B cell (primary cell): ENCODE measurements at regions of chr1 and their contacts with region 1.

Region 1: DNA sequence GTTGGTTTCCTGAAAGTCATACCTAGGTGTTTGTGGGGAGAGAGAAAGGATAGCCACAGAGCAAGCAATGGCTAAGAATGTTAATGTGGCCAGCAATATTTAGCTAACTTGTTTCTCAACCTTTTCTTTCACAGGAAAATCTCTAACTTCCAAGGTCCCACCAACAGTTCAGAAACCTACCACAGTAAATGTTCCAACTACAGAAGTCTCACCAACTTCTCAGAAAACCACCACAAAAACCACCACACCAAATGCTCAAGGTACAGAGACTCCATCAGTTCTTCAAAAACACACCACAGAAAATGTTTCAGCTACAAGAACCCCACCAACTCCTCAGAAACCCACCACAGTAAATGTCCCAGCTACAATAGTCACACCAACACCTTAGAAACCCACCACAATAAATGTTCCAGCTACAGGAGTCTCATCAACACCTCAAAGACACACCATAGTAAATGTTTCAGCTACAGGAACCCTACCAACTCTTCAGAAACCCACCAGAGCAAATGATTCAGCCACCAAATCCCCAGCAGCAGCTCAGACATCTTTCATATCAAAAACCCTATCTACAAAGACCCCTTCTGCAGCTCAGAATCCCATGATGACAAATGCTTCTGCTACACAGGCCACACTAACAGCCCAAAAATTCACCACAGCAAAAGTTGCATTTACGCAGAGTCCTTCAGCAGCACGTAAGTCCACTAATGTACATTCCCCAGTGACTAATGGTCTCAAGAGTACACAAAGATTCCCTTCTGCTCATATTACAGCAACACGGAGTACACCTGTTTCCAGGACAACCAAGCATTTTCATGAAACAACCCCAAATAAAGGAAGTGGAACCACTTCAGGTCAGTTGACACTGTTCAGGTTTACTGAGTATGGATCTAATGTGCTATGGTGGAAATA is 15.3 kb downstream of the CD55 start:
- DNase-seq: peak; percentile 92
- ATAC-seq: peak; percentile 79
- H3K4me3 ChIP-seq: peak overlapping the region in 3 of 5 experiments; percentile 15 to 42 (median 27)
- H3K4me3 Mint-ChIP-seq: peak overlapping the region; percentile 72
- H3K27ac ChIP-seq: peak overlapping the region; percentile 95 to 98
- H3K27ac Mint-ChIP-seq: peak overlapping the region; percentile 94
- H3K4me1 ChIP-seq: peaks cover 52 to 74% of the 10 kb centered on the region in 2 donors
- H3K4me1 Mint-ChIP-seq: peaks cover 75% of the 10 kb centered on the region
- H3K27me3 ChIP-seq: no peaks in the 10 kb centered on the region
- H3K27me3 Mint-ChIP-seq: no peaks in the 10 kb centered on the region
- CTCF ChIP-seq: no peak

Region 2: DNA sequence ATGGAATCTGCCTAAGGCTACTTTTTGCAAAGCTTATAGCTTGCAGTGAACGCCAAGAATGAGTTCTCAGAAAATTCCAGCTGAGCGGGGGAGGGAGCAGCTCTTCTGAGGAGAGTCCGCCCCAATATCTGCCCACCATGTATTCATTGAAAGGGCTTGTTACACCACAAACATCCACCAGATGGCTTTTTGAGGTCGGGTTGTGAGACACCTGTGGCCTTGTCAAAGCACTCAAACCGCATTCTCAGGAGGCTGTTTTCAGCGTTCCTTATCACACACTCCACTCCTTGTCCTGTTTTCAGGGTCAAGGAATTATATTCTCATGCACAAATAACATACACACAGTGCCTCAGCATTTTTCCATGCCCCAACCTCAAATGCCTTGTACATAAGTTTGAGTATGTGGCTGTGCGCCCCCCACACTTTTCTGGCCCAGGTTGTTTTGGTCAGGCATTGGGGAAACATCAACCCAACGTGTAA is 252.1 kb before region 1 on chr1:
- CTCF ChIA-PET with region 1: interaction called, 6 read pairs
- POLR2A ChIA-PET with region 1: no interaction called
- intact Hi-C with region 1: loop called (anchors 5 kb)
- DNase-seq: peak; percentile 82
- ATAC-seq: peak; percentile 84
- H3K4me3 ChIP-seq: no peak overlapping the region
- H3K4me3 Mint-ChIP-seq: no peak overlapping the region
- H3K27ac ChIP-seq: no peak overlapping the region
- H3K27ac Mint-ChIP-seq: no peak overlapping the region
- H3K4me1 ChIP-seq: peaks cover 14 to 15% of the 10 kb centered on the region in 2 donors
- H3K4me1 Mint-ChIP-seq: peaks cover 13% of the 10 kb centered on the region
- H3K27me3 ChIP-seq: no peaks in the 10 kb centered on the region
- H3K27me3 Mint-ChIP-seq: no peaks in the 10 kb centered on the region
- CTCF ChIP-seq: peak; percentile 77

Region 3: DNA sequence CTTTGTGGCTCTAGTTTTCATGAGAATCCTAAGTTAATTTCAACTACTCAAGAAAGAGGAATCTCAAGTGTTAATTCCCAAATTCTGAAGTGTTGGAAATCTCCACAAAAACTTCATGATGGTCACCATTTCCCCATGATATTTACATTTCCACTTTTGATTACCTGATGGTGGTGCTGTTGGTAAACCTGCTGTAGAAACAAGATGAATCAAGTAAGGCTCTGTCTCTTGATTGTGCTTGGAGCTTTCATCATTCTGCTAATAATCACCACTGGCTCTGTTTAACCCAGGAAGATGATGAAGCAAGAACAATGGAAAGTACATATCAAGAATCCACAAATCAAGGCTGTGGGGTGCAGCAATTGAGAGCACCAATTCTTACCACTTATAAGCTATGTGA is 155.0 kb before region 1 on chr1:
- CTCF ChIA-PET with region 1: interaction called, 12 read pairs
- POLR2A ChIA-PET with region 1: no interaction called
- intact Hi-C with region 1: no loop called
- DNase-seq: peak; percentile 54
- ATAC-seq: no peak
- H3K4me3 ChIP-seq: no peak overlapping the region
- H3K4me3 Mint-ChIP-seq: no peak overlapping the region
- H3K27ac ChIP-seq: no peak overlapping the region
- H3K27ac Mint-ChIP-seq: no peak overlapping the region
- H3K4me1 ChIP-seq: no peaks in the 10 kb centered on the region
- H3K4me1 Mint-ChIP-seq: peaks cover 11% of the 10 kb centered on the region
- H3K27me3 ChIP-seq: no peaks in the 10 kb centered on the region
- H3K27me3 Mint-ChIP-seq: peaks cover 6% of the 10 kb centered on the region
- CTCF ChIP-seq: peak; percentile 43

Region 4: DNA sequence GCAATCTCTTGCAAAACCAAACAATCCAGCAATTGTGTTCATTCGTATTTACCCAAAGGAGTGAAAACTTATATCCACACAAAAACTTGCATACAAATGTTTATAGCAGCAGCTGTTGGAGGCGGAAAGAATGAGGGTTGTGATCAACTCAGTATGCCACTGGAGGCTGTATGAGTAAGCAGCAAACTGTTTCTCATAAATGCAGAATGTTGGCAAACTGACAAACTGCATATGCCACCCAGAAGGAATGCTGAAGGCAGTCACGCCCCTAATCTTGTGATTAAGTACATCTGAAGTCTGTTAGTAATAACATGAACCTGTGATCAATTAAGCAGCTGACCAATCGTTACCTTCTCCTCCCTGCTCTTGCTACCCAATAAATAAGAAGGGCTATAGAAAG is 56.8 kb after region 1 on chr1:
- CTCF ChIA-PET with region 1: no interaction called
- POLR2A ChIA-PET with region 1: no interaction called
- intact Hi-C with region 1: no loop called
- DNase-seq: no peak
- ATAC-seq: no peak
- H3K4me3 ChIP-seq: no peak overlapping the region
- H3K4me3 Mint-ChIP-seq: no peak overlapping the region
- H3K27ac ChIP-seq: no peak overlapping the region
- H3K27ac Mint-ChIP-seq: no peak overlapping the region
- H3K4me1 ChIP-seq: no peaks in the 10 kb centered on the region
- H3K4me1 Mint-ChIP-seq: peaks cover 7% of the 10 kb centered on the region
- H3K27me3 ChIP-seq: no peaks in the 10 kb centered on the region
- H3K27me3 Mint-ChIP-seq: no peaks in the 10 kb centered on the region
- CTCF ChIP-seq: no peak

Region 5: DNA sequence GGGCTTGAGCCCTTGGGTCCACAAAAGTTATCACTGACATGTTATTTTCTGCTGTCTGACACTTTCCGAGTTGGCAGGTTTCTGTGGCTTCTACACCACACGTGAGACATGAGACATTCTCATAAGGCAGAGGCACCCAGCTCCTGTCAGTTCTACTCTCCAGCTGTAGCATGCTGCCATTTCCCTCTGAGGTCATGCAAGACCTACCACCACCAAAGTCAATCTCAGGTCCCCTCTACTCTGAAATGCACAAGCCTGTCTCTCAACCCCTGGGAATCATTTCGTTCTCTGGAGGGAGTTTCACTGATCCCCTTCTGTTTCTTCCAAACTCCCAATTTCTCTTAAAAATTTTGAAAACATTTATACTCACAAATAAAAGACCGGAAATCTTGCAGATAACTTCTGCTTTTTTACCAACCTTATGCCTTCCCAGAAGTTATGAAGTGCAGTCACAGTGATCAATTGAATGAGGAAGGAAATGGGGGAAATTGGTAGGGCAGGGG is 77.8 kb after region 1 on chr1:
- CTCF ChIA-PET with region 1: no interaction called
- POLR2A ChIA-PET with region 1: no interaction called
- intact Hi-C with region 1: loop called (anchors 5 kb)
- DNase-seq: peak; percentile 84
- ATAC-seq: peak; percentile 90
- H3K4me3 ChIP-seq: peak overlapping the region in 4 of 5 experiments; percentile 28 to 39 (median 34)
- H3K4me3 Mint-ChIP-seq: peak overlapping the region; percentile 75
- H3K27ac ChIP-seq: peak overlapping the region; percentile 67 to 93
- H3K27ac Mint-ChIP-seq: peak overlapping the region; percentile 80
- H3K4me1 ChIP-seq: peaks cover 80 to 83% of the 10 kb centered on the region in 2 donors
- H3K4me1 Mint-ChIP-seq: peaks cover 77% of the 10 kb centered on the region
- H3K27me3 ChIP-seq: no peaks in the 10 kb centered on the region
- H3K27me3 Mint-ChIP-seq: no peaks in the 10 kb centered on the region
- CTCF ChIP-seq: no peak